ENCODE measurements at regions of chr1 and their contacts with region 1.

Region 1: DNA sequence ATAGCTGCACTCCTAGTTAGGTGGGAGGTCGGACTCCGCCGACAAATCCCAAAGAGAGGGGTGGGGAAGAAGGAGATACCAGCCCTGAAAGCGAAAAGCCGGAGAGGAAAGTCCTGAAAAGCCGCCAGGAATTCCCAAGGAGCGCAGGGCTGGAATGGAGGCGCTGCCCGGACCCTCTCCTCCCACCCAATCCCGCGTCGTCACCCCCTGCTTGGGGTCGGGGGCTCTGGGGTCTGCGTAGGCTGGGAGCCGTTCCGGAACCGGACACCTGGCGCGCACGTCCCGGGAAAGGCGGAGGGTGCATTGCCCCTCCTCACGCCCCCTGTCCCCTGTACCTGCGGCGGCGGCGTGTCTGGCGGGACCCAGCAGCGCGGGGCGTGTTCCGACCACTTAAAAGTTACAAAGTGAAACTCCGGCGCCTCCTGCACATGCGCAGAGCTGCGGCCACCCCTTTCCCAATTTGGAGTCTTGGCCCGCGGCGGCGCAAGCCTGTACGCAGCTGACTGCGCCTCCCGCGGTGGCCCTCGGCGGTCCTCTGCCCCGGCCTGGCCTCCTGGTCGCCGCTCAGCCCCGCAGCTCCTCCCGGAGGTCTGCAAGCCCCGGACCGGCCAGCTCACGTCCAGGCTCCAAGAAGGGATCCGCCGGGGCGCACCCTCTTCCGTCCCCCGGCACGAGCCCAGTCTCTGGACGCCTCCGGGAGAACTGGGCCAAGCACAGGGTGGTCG is at the start of gene TMEM63A:
- H3K4me3 ChIP-seq: peak within 1 kb of the TSS; percentile 86
- H3K27ac ChIP-seq: peak within 1 kb of the TSS; percentile 76
- H3K4me1 ChIP-seq: no peaks in the 10 kb centered on the region; the same call in 1 of the 2 replicates
- CTCF ChIP-seq: peak; percentile 98

Region 2: GRCh38 chr1:225809842-225810578 is 72.1 kb before region 1 on chr1 and contains the start of gene EPHX1:
- CTCF ChIA-PET with region 1: interaction called, 3 read pairs
- POLR2A ChIA-PET with region 1: interaction called, 11 read pairs
- H3K4me3 ChIP-seq: peak within 1 kb of the TSS; percentile 64
- H3K27ac ChIP-seq: peak within 1 kb of the TSS; percentile 61
- H3K4me1 ChIP-seq: peaks cover 20% of the 10 kb centered on the region
- CTCF ChIP-seq: peak; percentile 88

Region 3: GRCh38 chr1:225871359-225872074 is 10.6 kb before region 1 on chr1:
- CTCF ChIA-PET with region 1: interaction called, 5 read pairs
- POLR2A ChIA-PET with region 1: interaction called, 12 read pairs
- H3K4me3 ChIP-seq: no peak overlapping the region
- H3K27ac ChIP-seq: no peak overlapping the region
- H3K4me1 ChIP-seq: peaks cover 13% of the 10 kb centered on the region
- CTCF ChIP-seq: no peak

Region 4: GRCh38 chr1:225896937-225897549 is 14.9 kb after region 1 on chr1:
- CTCF ChIA-PET with region 1: interaction called, 14 read pairs
- POLR2A ChIA-PET with region 1: interaction called, 17 read pairs
- H3K4me3 ChIP-seq: no peak overlapping the region
- H3K27ac ChIP-seq: no peak overlapping the region
- H3K4me1 ChIP-seq: no peaks in the 10 kb centered on the region; the same call in 1 of the 2 replicates
- CTCF ChIP-seq: no peak

Region 5: GRCh38 chr1:225923692-225924555 is 41.8 kb after region 1 on chr1 and contains the start of gene PYCR2:
- CTCF ChIA-PET with region 1: interaction called, 3 read pairs
- POLR2A ChIA-PET with region 1: interaction called, 31 read pairs
- H3K4me3 ChIP-seq: peak within 1 kb of the TSS; percentile 80
- H3K27ac ChIP-seq: peak within 1 kb of the TSS; percentile 88
- H3K4me1 ChIP-seq: peaks cover 11% of the 10 kb centered on the region; the same call in 1 of the 2 replicates
- CTCF ChIP-seq: peak; percentile 81; the same call in 1 of the 2 replicates